ENCODE measurements at regions of chr10 and their contacts with region 1.

Region 1: GRCh38 chr10:91251430-91252056 is 31.1 kb downstream of the PCGF5 start:
- DNase-seq: peak; percentile 52
- ATAC-seq: peak; percentile 73
- H3K4me3 Mint-ChIP-seq: no peak overlapping the region
- H3K27ac Mint-ChIP-seq: no peak overlapping the region
- H3K4me1 Mint-ChIP-seq: peaks cover 4% of the 10 kb centered on the region
- H3K27me3 Mint-ChIP-seq: no peaks in the 10 kb centered on the region
- CTCF ChIP-seq: peak; percentile 93

Region 2: DNA sequence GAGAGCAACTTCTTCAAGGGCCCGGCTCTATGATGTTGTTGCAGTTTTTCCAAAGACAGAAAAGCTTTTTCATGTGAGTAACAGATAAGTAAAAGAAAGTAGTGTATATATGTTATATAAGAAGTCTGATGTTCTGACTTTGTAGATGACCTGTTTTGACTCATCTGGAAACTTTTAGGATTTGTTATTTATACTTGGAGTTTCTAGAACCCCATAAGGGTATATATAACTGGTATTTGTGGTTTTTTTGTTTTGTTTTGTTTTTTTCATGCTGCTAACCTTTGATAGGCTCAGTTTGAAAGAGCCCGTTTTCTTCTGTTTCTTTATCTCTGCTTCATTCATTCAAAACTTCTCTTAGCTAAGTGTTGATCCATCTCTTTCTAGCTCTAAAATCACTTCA is 372.5 kb before region 1 on chr10:
- CTCF ChIA-PET with region 1: interaction called, 18 read pairs
- POLR2A ChIA-PET with region 1: no interaction called
- intact Hi-C with region 1: no loop called
- DNase-seq: no peak
- ATAC-seq: no peak
- H3K4me3 Mint-ChIP-seq: no peak overlapping the region
- H3K27ac Mint-ChIP-seq: no peak overlapping the region
- H3K4me1 Mint-ChIP-seq: peaks cover 6% of the 10 kb centered on the region
- H3K27me3 Mint-ChIP-seq: no peaks in the 10 kb centered on the region
- CTCF ChIP-seq: no peak

Region 3: GRCh38 chr10:91043173-91043910 is 208.2 kb before region 1 on chr10:
- CTCF ChIA-PET with region 1: interaction called, 31 read pairs
- POLR2A ChIA-PET with region 1: no interaction called
- intact Hi-C with region 1: no loop called
- DNase-seq: no peak
- ATAC-seq: no peak
- H3K4me3 Mint-ChIP-seq: no peak overlapping the region
- H3K27ac Mint-ChIP-seq: no peak overlapping the region
- H3K4me1 Mint-ChIP-seq: no peaks in the 10 kb centered on the region
- H3K27me3 Mint-ChIP-seq: peaks cover 3% of the 10 kb centered on the region
- CTCF ChIP-seq: no peak

Region 4: GRCh38 chr10:91153508-91153907 is 98.0 kb before region 1 on chr10:
- CTCF ChIA-PET with region 1: interaction called, 13 read pairs
- POLR2A ChIA-PET with region 1: no interaction called
- intact Hi-C with region 1: no loop called
- DNase-seq: no peak
- ATAC-seq: no peak
- H3K4me3 Mint-ChIP-seq: no peak overlapping the region
- H3K27ac Mint-ChIP-seq: no peak overlapping the region
- H3K4me1 Mint-ChIP-seq: no peaks in the 10 kb centered on the region
- H3K27me3 Mint-ChIP-seq: no peaks in the 10 kb centered on the region
- CTCF ChIP-seq: no peak

Region 5: DNA sequence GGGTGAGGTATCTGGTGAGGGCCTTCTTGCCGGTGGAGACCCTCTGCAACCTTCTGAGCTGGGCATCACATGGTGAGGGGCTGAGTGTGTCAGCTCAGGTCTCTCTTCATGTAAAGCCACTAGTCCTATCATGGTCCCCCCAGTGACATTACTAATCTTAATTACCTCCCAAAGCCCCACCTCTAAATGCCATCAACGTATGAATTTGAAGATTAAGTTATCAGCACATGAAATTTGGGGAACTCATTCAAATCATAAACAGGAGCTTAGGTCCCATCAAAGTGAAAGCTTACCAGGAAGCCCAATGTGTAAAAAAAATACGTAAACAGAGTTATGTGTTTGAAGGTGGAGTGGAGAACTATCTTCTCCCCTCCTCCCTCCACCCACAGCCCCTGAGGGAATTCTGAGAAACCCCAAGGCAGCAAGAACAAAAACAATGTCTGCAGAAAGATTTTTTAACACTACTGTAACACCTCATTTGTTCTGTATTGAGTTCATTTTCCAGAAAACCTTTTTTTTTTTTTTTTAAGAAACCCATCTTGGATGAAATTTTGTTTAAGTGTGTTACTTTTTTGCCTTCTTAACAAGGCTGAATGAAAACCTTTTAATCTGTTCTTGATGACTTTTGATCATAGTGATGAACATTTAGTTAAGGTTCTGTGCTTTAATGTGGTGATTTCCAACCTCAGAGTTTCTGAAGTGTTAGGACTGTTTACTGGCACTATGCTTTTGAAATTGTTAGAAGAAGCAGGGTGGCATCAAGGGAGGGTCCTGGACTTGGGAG is 50.1 kb before region 1 on chr10:
- CTCF ChIA-PET with region 1: interaction called, 12 read pairs
- POLR2A ChIA-PET with region 1: no interaction called
- intact Hi-C with region 1: no loop called
- DNase-seq: peak; percentile 77
- ATAC-seq: peak; percentile 65
- H3K4me3 Mint-ChIP-seq: peak overlapping the region; percentile 64
- H3K27ac Mint-ChIP-seq: peak overlapping the region; percentile 85
- H3K4me1 Mint-ChIP-seq: peaks cover 80% of the 10 kb centered on the region
- H3K27me3 Mint-ChIP-seq: no peaks in the 10 kb centered on the region
- CTCF ChIP-seq: no peak

Region 6: GRCh38 chr10:91227576-91227975 is 24.0 kb before region 1 on chr10:
- CTCF ChIA-PET with region 1: interaction called, 18 read pairs
- POLR2A ChIA-PET with region 1: no interaction called
- intact Hi-C with region 1: no loop called
- DNase-seq: no peak
- ATAC-seq: peak; percentile 70
- H3K4me3 Mint-ChIP-seq: no peak overlapping the region
- H3K27ac Mint-ChIP-seq: peak overlapping the region; percentile 34
- H3K4me1 Mint-ChIP-seq: peaks cover 45% of the 10 kb centered on the region
- H3K27me3 Mint-ChIP-seq: no peaks in the 10 kb centered on the region
- CTCF ChIP-seq: no peak

Measured in activated CD8-positive, alpha-beta T cell treated with anti-CD3 and anti-CD28 coated beads for 36 hours (primary cell).